Activated naive CD4-positive, alpha-beta T cell treated with anti-CD3 and anti-CD28 coated beads for 36 hours (primary cell): ENCODE measurements at regions of chr3 and their contacts with region 1.

Region 1: GRCh38 chr3:108090701-108091451 is at the start of gene CD47:
- DNase-seq: peak; percentile 94
- H3K4me3 Mint-ChIP-seq: peak within 1 kb of the TSS; percentile 97
- H3K27ac Mint-ChIP-seq: peak within 1 kb of the TSS; percentile 98
- H3K4me1 Mint-ChIP-seq: peaks cover 25% of the 10 kb centered on the region
- H3K27me3 Mint-ChIP-seq: no peaks in the 10 kb centered on the region
- total RNA-seq, gene CD47: 60.2 to 63.7 TPM

Region 2: GRCh38 chr3:106176734-106177133 is 1914.1 kb before region 1 on chr3:
- CTCF ChIA-PET with region 1: no interaction called
- intact Hi-C with region 1: loop called (anchors 10 kb)
- DNase-seq: peak; percentile 79
- H3K4me3 Mint-ChIP-seq: peak overlapping the region; percentile 38
- H3K27ac Mint-ChIP-seq: peak overlapping the region; percentile 93
- H3K4me1 Mint-ChIP-seq: peaks cover 59% of the 10 kb centered on the region
- H3K27me3 Mint-ChIP-seq: no peaks in the 10 kb centered on the region

Region 3: GRCh38 chr3:107870943-107871638 is 219.8 kb before region 1 on chr3:
- CTCF ChIA-PET with region 1: no interaction called
- intact Hi-C with region 1: loop called (anchors 2 kb)
- DNase-seq: peak; percentile 18
- H3K4me3 Mint-ChIP-seq: no peak overlapping the region
- H3K27ac Mint-ChIP-seq: no peak overlapping the region
- H3K4me1 Mint-ChIP-seq: peaks cover 11% of the 10 kb centered on the region
- H3K27me3 Mint-ChIP-seq: peaks cover 4% of the 10 kb centered on the region

Region 4: DNA sequence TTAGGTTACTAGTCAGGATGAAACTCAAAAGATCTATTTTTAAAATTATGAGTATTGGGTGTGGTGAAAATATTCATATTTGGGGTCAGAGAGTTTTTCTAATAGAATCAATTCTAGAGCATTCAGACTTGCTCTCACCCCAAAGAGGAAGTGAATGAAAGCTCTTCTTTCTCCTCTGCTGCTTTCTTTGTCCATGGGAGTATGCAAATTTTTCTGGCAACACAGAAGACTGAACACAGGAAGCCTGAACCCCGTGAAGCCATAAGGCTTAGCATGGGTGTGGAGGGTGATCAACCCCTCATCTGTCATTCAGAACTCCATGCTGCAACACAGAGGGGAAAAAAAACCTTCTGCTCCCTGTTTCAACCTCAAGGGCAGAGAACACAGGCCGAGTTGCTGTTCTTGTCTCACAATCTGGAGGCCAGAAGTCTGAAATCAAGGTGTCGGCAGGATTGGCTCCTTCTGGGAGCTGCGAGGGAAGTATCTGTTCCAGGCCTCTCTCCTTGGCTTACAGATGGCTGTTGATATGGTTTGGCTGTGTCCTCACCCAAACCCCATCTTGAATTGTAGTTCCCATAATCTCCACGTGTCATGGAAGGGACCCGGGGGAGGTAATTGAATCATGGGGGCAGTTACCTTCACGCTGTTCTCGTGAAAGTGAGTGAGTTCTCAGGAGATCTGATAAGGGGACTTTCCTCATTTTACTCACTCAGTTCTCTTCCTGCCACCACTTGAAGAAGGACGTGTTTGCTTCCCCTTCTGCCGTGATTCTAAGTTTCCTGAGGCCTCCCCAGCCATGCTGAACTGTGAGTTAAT is 33.7 kb after region 1 on chr3:
- CTCF ChIA-PET with region 1: interaction called, 7 read pairs
- intact Hi-C with region 1: loop called (anchors 1 kb)
- DNase-seq: peak; percentile 84
- H3K4me3 Mint-ChIP-seq: peak overlapping the region; percentile 90
- H3K27ac Mint-ChIP-seq: peak overlapping the region; percentile 100
- H3K4me1 Mint-ChIP-seq: peaks cover 56% of the 10 kb centered on the region
- H3K27me3 Mint-ChIP-seq: no peaks in the 10 kb centered on the region

Region 5: GRCh38 chr3:108301695-108302404 is 211.0 kb after region 1 on chr3:
- CTCF ChIA-PET with region 1: no interaction called
- intact Hi-C with region 1: loop called (anchors 1 kb)
- DNase-seq: peak; percentile 26
- H3K4me3 Mint-ChIP-seq: peak overlapping the region; percentile 48
- H3K27ac Mint-ChIP-seq: peak overlapping the region; percentile 59
- H3K4me1 Mint-ChIP-seq: peaks cover 45% of the 10 kb centered on the region
- H3K27me3 Mint-ChIP-seq: no peaks in the 10 kb centered on the region

Region 6: GRCh38 chr3:108818404-108818803 is 727.5 kb after region 1 on chr3:
- CTCF ChIA-PET with region 1: no interaction called
- intact Hi-C with region 1: loop called (anchors 2 kb)
- DNase-seq: peak; percentile 86
- H3K4me3 Mint-ChIP-seq: peak overlapping the region; percentile 48
- H3K27ac Mint-ChIP-seq: peak overlapping the region; percentile 79
- H3K4me1 Mint-ChIP-seq: peaks cover 24% of the 10 kb centered on the region
- H3K27me3 Mint-ChIP-seq: no peaks in the 10 kb centered on the region